Activated CD8-positive, alpha-beta T cell treated with anti-CD3 and anti-CD28 coated beads for 36 hours (primary cell): ENCODE measurements at regions of chr9 and their contacts with region 1.

Region 1: DNA sequence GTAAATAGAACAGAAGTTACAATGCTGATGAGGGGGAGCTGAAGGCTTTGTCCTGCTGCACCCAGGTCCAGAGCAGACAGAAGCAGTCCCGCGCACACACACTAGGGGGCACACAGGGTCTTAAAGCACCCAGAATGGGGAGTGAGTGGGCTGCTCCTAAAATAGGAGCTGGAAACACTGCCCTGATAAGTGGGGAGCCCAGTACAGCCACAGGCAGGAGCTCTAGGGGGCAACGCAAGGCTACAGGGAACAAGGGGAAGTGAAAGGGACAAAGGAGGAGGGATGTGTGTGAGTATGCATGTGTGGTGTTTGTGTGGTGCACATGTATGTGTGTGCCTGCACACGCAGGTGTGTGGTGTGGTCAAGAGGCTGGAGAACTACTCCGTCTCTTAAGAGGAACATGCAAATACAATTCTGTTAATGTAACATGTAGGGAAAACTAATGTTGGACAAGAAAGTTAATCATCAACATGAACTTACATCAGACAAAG is 191.5 kb downstream of the ROR2 start:
- DNase-seq: peak; percentile 69
- ATAC-seq: peak; percentile 69
- H3K4me3 Mint-ChIP-seq: no peak overlapping the region
- H3K27ac Mint-ChIP-seq: no peak overlapping the region
- H3K4me1 Mint-ChIP-seq: no peaks in the 10 kb centered on the region
- H3K27me3 Mint-ChIP-seq: peaks cover 2% of the 10 kb centered on the region
- CTCF ChIP-seq: peak; percentile 70

Region 2: GRCh38 chr9:91775011-91775707 is 16.6 kb after region 1 on chr9:
- CTCF ChIA-PET with region 1: interaction called, 11 read pairs
- POLR2A ChIA-PET with region 1: no interaction called
- intact Hi-C with region 1: no loop called
- DNase-seq: peak; percentile 79
- ATAC-seq: peak; percentile 73
- H3K4me3 Mint-ChIP-seq: no peak overlapping the region
- H3K27ac Mint-ChIP-seq: no peak overlapping the region
- H3K4me1 Mint-ChIP-seq: no peaks in the 10 kb centered on the region
- H3K27me3 Mint-ChIP-seq: peaks cover 12% of the 10 kb centered on the region
- CTCF ChIP-seq: peak; percentile 87

Region 3: GRCh38 chr9:91847581-91848091 is 89.1 kb after region 1 on chr9:
- CTCF ChIA-PET with region 1: no interaction called
- POLR2A ChIA-PET with region 1: no interaction called
- intact Hi-C with region 1: no loop called
- DNase-seq: peak; percentile 33
- ATAC-seq: no peak
- H3K4me3 Mint-ChIP-seq: no peak overlapping the region
- H3K27ac Mint-ChIP-seq: no peak overlapping the region
- H3K4me1 Mint-ChIP-seq: peaks cover 7% of the 10 kb centered on the region
- H3K27me3 Mint-ChIP-seq: peaks cover 7% of the 10 kb centered on the region
- CTCF ChIP-seq: no peak